ENCODE measurements at regions of chr5 and their contacts with region 1.

Region 1: DNA sequence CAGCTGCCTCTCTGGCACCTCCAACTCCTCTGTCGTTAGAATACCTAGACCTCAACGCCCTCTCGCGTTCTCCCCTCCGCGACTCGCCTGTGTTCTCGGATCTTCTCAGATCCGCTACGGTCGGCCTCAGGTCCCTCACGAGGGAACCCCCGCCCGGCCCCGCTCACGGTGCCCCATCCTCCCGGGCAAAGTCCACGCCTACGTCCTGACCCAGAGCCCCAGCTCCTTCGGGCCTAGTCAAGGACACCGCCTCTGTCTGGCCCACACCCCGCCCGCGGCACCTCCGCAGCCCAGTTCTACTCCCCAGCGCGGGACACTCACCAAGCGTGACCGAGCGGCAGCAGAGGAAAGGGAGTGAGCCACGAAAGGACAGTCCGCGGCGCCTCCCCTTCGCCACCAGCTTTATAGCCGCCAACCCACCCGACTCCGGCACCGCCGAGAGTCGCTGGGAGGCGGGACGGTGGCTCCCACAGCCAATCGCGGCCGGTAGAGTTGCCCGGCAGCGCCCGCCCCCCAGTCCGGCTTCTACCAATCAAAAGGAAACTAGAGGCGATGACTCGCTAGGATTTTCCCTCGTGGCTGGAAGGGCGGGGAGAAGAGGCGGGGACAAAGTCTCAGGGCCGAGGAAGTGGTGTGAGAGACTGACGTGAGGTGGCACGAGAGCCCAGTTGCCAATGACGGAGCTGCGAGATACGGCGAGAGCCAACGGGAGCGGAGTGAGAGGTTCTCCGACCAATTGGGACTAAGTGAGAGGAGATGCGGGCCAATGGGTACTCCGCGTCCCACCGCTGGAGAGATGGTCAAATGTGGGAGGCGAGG is at the start of gene HMGCS1:
- DNase-seq: peak; percentile 99
- ATAC-seq: peak; percentile 99
- H3K4me3 ChIP-seq: peak within 1 kb of the TSS; percentile 52 to 85
- H3K27ac ChIP-seq: peak within 1 kb of the TSS; percentile 49 to 64
- H3K4me1 ChIP-seq: no peaks in the 10 kb centered on the region
- H3K27me3 ChIP-seq: no peaks in the 10 kb centered on the region
- total RNA-seq, gene HMGCS1: 41.9 to 57.9 TPM

Region 2: DNA sequence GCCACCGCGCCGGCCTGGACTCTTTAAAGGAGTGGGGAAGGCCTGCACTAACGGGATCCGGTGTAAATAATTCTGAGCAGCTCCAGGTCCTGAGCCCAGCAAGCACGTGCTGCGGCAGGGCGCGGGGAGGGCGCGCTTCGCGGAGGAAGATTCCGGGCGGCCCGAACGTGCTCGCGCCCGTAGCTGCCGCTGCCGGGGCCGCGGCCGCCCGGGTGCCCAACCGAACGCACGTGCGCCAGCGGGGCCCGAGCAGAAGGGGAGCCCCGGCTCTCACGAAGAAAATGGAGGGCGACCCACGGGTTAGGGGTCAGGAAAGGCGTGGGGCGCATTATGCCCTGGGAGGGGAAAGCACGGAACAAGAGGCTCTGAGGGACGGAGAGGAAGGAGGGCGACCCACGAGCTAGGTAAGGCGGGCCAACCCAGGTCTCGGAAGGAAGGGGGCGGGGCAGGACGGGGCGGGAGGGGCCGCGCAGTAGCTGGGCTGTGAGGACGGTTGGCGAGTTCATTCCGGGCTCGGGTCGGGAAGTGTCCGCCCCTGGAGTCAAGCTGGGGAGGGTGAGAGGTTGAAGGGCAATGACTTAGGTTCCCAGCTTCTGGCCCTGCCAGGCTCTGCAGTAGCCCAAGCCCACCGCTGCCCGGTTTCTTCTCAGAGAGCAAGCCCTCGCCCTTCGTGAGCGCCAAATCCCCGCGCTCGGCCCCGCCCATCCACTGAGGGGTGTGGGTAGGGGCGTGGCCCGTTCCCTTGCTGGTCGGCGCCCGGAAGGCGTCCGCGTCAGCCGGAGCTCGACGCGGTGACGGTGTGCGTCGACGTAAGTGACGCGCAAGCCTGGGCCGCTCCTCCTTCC is 192.3 kb before region 1 on chr5 and contains the start of gene ZNF131:
- intact Hi-C with region 1: loop called (anchors 5 kb)
- DNase-seq: peak; percentile 97 to 99
- ATAC-seq: peak; percentile 100
- H3K4me3 ChIP-seq: peak within 1 kb of the TSS; percentile 82 to 83
- H3K27ac ChIP-seq: peak within 1 kb of the TSS; percentile 83 to 92
- H3K4me1 ChIP-seq: no peaks in the 10 kb centered on the region
- H3K27me3 ChIP-seq: no peaks in the 10 kb centered on the region
- total RNA-seq, gene ZNF131: 36.6 to 45.0 TPM

Region 3: GRCh38 chr5:43258116-43258515 is 55.1 kb before region 1 on chr5:
- intact Hi-C with region 1: no loop called
- DNase-seq: no peak
- ATAC-seq: no peak
- H3K4me3 ChIP-seq: no peak overlapping the region
- H3K27ac ChIP-seq: no peak overlapping the region
- H3K4me1 ChIP-seq: no peaks in the 10 kb centered on the region
- H3K27me3 ChIP-seq: peaks cover 0 to 2% of the 10 kb centered on the region in 2 donors

Region 4: GRCh38 chr5:43389679-43390329 is 76.6 kb after region 1 on chr5:
- intact Hi-C with region 1: loop called in 1 of 2 experiments (anchors 5 kb)
- DNase-seq: peak in 1 of 2 donors; percentile 59
- ATAC-seq: peak; percentile 87
- H3K4me3 ChIP-seq: no peak overlapping the region
- H3K27ac ChIP-seq: no peak overlapping the region
- H3K4me1 ChIP-seq: no peaks in the 10 kb centered on the region
- H3K27me3 ChIP-seq: no peaks in the 10 kb centered on the region

Region 5: DNA sequence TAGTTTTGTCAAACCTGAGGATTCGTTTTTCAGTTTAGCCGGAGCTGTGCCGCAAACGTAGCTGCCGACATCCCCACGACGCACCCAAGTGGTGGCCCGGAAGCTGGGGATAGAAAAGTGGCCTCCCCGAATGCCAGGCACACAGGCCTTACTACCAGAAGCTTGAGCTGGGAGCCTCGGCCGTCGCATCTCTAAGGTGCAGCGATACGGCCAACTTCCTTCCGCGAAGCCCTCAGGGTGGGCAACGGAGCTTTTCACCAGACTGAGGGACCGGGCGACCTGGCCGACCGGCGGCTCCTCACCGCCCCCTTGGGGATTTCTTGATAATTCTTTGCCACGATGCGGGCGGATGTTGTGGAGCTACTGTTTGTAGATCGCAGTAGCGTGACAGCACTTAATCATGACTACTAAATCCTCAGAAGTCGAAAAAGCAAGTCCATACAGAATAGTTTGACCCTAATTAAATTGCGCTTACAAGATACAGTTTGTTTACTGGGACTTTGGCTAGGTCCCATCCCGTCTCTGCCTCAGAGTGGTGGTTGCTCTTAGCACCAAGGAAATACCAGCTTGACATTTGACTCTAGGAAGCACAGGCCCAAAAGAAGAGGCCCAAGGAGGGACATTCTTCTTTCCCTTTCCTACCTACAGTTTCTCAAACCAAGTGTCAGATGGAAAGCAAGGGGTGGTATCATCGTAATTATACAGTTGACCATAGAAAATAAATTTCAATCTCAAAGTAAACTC is 171.0 kb after region 1 on chr5:
- intact Hi-C with region 1: loop called (anchors 2 to 10 kb)
- DNase-seq: peak; percentile 88 to 91
- ATAC-seq: peak; percentile 93
- H3K4me3 ChIP-seq: peak overlapping the region; percentile 37 to 82
- H3K27ac ChIP-seq: peak overlapping the region; percentile 89 to 91
- H3K4me1 ChIP-seq: no peaks in the 10 kb centered on the region
- H3K27me3 ChIP-seq: no peaks in the 10 kb centered on the region

Region 6: DNA sequence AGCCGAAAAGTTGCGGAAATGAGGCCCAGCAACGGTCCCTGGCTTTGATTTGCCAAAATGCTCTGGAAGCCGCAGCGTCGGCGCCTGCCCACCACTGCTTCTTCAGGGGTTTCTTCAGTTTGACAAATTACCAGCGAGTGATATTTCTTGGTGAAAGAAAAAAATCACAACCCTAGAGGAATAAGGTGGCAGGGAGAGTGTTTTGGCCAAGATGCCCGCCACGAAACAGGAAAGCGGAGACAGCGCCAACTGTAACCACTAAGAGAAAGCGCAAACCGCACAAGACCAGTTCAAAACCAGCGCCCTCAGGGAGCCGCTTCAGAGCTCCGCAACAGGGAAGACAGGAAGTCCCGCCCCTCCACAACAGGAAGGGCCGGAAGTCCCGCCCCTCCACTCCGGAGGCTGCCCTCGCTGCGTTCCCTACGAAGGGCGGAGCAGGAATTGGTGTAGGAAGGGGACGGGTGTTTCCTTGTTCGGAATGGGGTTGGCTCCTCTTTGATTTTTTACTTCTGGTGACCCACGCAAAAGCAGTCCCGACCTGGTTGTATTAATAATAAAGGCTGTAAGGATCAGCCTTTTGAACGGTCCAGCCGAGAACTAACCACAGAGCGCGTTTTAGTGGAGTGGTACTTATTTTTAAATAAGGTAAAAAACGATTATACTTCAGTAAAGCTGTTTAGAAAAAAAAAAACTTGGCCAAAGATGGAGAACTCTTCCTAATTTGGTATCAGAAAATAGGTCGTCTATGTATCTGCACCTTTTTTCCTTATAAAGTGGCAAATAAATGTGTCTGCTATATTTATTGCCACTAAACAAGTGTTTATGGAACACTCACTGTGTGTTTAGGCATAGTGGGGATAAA is 201.8 kb after region 1 on chr5 and contains the start of gene C5orf34:
- intact Hi-C with region 1: loop called in 1 of 2 experiments (anchors 10 kb)
- DNase-seq: peak; percentile 97 to 99
- ATAC-seq: peak; percentile 100
- H3K4me3 ChIP-seq: peak within 1 kb of the TSS; percentile 63 to 92
- H3K27ac ChIP-seq: peak within 1 kb of the TSS; percentile 44 to 92
- H3K4me1 ChIP-seq: peaks cover 0 to 4% of the 10 kb centered on the region in 2 donors
- H3K27me3 ChIP-seq: no peaks in the 10 kb centered on the region
- total RNA-seq, gene C5orf34: 2.0 to 2.3 TPM

Region 7: DNA sequence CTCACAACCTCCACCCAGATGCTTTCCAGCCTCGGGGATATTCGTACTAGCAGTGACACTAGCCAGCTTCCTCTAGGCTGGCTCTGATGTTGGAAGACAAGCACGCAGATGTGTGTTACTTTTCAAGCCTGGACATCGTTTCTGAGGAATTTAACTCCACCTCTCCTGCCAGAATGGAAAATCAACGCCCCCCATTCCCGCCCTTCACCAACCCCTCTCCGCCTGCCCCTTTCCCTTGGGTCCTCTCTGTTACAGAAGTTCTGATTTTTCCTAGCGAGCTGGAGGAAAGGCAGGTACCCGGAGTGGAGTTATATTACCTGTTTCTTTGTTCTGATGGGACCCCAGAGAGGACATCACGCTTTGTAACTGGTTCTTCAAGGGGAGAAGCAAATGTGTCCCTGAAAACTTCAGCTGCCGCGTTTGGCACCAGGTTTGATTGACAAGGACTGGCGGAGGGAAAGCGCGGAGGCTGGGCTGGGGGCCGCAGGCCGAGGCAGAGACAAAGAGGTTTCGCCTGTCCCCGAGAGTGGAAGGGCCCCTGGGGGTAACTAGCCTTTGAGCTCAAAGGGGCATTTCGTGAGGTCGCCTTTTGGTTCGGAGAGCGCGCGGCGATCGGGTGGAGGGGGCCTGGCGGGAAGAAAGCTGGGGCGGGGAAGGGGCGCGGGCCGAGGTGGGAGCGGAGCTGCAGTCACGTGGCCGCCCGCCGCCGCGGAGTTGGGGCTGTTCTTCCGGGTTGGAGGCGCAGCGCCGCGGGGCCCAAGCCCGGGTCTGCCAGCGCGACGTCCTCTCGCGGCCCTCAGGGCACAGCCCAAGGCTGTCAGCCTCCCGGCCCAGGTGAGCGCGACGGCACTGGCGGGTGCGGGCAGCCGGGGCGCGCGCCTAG is 289.5 kb after region 1 on chr5 and contains the start of gene NNT:
- intact Hi-C with region 1: loop called in 1 of 2 experiments (anchors 5 kb)
- DNase-seq: peak; percentile 87 to 94
- ATAC-seq: peak; percentile 94
- H3K4me3 ChIP-seq: peak within 1 kb of the TSS; percentile 51 to 66
- H3K27ac ChIP-seq: peak within 1 kb of the TSS; percentile 22 to 60
- H3K4me1 ChIP-seq: peaks cover 0 to 5% of the 10 kb centered on the region in 2 donors
- H3K27me3 ChIP-seq: no peaks in the 10 kb centered on the region
- total RNA-seq, gene NNT: 53.6 to 69.4 TPM